ENCODE measurements at regions of chr15 and their contacts with region 1.

Region 1: GRCh38 chr15:101198800-101199199 is 53.0 kb downstream of the CHSY1 start:
- DNase-seq: no peak
- H3K4me3 Mint-ChIP-seq: peak overlapping the region; percentile 48
- H3K27ac Mint-ChIP-seq: peak overlapping the region; percentile 85
- H3K4me1 Mint-ChIP-seq: peaks cover 81% of the 10 kb centered on the region
- H3K27me3 Mint-ChIP-seq: no peaks in the 10 kb centered on the region

Region 2: DNA sequence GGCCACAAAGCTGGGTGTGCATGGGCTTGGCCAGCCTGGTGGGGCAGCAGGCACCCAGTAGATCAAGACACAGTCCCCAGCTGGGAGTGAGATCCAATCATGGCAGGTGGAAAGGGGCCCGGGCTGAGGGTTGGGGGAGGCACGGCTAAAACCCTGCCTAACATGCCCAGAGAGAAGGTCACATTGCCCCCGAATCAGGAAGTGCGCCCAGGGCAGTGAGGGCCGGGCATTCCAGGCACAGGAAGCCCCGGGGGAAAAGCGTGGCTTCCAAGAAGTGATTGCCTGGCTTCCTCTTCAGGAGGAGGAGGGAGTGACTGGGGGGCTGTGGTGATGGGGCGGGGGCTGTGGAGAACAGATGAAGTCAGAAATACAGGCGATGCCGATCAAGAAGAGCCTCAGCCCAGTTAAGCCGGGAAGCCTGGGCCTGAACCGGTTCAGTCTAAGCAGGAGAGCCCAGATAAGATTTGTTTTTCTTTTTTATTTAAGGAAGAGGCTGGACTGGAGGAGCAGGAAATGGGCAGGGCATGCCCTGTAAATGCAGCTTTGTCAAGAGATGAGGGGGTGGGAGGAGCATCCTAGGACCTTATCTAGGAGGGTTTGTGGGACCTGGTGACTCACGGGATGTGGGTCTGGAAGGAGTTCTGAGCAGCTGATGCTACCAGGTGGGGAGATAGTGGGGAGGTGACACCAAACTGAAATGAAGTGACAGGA is 30.9 kb before region 1 on chr15:
- CTCF ChIA-PET with region 1: interaction called, 3 read pairs
- intact Hi-C with region 1: loop called (anchors 2 kb)
- DNase-seq: peak; percentile 93
- H3K4me3 Mint-ChIP-seq: peak overlapping the region; percentile 58
- H3K27ac Mint-ChIP-seq: peak overlapping the region; percentile 88
- H3K4me1 Mint-ChIP-seq: peaks cover 23% of the 10 kb centered on the region
- H3K27me3 Mint-ChIP-seq: no peaks in the 10 kb centered on the region

Region 3: DNA sequence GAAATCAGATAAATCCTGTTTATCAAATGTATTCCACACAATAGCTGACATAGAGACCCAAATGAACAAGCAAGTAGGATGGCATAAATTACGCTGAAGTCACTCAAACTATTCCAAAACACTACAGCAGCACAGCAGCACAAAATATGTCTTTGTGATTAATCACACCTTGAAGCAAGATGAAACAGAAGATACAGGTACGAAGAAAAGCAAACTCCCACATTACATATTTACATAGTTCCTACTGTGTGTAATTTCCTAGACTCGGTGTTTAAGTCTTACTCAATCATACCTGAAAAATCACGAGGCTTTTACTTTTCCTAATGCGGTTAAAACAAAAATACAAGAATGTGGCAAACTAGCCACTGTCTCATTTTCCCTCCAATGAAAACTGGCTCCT is 14.8 kb after region 1 on chr15:
- CTCF ChIA-PET with region 1: no interaction called
- intact Hi-C with region 1: no loop called
- DNase-seq: no peak
- H3K4me3 Mint-ChIP-seq: no peak overlapping the region
- H3K27ac Mint-ChIP-seq: no peak overlapping the region
- H3K4me1 Mint-ChIP-seq: peaks cover 60% of the 10 kb centered on the region
- H3K27me3 Mint-ChIP-seq: no peaks in the 10 kb centered on the region